ENCODE measurements at regions of chr11 and their contacts with region 1.

Region 1: GRCh38 chr11:8192016-8192895 is 23.4 kb upstream of the RIC3 start:
- H3K4me3 ChIP-seq: no peak overlapping the region
- H3K27ac ChIP-seq: no peak overlapping the region
- H3K4me1 ChIP-seq: no peaks in the 10 kb centered on the region
- CTCF ChIP-seq: peak; percentile 61

Region 2: GRCh38 chr11:7874061-7874460 is 318.2 kb before region 1 on chr11:
- CTCF ChIA-PET with region 1: no interaction called
- POLR2A ChIA-PET with region 1: no interaction called
- H3K4me3 ChIP-seq: no peak overlapping the region
- H3K27ac ChIP-seq: no peak overlapping the region
- H3K4me1 ChIP-seq: no peaks in the 10 kb centered on the region
- CTCF ChIP-seq: no peak

Region 3: GRCh38 chr11:8180469-8180868 is 11.8 kb before region 1 on chr11:
- CTCF ChIA-PET with region 1: interaction called, 18 read pairs
- POLR2A ChIA-PET with region 1: no interaction called
- H3K4me3 ChIP-seq: no peak overlapping the region
- H3K27ac ChIP-seq: no peak overlapping the region
- H3K4me1 ChIP-seq: no peaks in the 10 kb centered on the region
- CTCF ChIP-seq: no peak

Region 4: DNA sequence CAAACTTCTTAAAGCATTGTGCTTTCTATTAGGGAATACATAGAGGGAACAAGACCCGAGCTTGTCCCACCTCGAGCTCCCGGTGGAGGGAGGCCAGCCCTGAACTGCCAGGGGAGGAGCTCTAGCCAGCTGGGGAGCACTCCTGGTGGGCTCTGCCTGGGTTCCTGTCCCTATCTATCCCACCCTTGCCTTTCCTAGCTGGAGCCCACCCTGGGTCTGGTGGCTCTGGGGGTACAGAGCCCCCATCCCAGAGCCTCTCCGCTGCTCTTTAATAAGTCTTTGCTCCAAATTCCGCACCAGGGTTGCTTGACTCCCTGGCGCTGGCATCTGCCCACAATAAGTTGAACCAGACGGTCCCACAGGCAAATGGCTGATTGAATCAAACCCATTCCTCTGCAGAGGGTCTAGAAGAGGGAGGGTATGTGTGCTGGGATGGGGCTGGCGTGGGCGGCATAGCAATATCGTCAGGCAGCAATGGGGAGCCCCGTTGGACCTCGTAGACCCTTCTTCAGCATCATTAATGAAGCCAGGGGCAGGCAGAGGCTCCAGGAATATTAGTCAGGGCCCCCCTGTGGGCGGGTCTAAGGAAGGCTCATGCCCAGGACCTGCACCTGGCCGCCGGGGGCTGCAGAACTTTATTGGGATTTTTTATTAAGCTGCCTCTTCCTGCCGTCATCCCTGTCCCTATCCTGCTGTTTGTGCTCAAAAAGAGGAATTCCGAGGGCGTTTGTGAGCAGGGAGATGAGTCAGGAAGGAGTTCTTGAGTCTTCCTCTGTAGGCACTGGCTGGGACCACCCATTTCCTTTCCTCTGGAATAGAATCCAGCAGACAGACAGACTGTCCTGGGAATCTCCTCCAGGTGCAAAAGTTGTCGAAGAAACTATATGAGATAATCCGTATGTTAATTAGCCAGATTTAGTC is 15.1 kb after region 1 on chr11:
- CTCF ChIA-PET with region 1: interaction called, 15 read pairs
- POLR2A ChIA-PET with region 1: no interaction called
- H3K4me3 ChIP-seq: no peak overlapping the region
- H3K27ac ChIP-seq: no peak overlapping the region
- H3K4me1 ChIP-seq: no peaks in the 10 kb centered on the region
- CTCF ChIP-seq: no peak

Measured in HEK293 (cell line).